Heart left ventricle (tissue), 16 donors: ENCODE measurements at regions of chr4 and their contacts with region 1.

Region 1: DNA sequence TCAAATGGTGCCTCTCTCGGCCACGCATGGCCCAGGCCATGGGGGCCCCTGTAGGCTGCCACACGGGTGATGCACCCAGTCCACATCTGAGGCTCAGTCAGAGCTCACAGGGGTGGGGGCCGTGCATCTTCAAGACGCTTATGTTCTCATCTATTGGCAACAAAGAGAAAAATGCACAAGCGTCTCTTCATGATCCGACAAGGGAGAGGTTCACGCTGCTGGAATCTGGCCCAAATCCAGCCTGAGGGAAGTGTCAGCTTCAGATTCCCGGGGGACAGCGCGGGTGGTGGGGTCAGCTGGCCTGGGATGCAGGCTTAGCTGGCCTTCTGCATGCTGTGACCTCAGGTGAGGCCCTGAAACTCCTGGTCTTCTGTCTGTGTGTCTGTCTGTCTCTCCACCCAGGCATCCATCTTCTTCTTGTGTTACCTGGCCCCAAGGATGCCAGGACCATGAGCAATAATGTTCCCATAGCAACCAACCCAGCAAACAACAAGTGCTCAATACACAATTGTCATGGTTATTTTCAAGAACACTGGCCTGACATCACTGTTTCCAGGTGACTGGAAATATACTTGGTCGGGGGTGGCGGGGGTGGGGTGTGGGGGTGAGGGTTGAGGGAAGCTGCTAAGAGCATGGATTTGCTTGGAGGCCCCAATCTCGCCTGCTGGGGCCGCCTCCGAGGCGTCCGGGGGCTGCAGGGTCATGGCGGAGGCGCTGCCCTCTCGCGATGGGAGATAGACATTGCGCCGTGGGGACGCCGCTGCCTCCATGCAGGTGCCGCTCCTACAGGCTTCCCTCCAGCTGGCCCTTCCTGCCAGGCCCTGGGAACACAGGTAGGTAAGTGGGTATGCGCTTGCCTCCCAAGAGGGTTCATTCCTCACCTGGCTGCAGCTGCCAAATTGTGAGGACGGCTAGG is 48.3 kb downstream of the ABLIM2 start:
- DNase-seq: peak in 1 of 5 donors; percentile 47
- ATAC-seq: no peak
- H3K4me3 ChIP-seq: no peak overlapping the region
- H3K27ac ChIP-seq: no peak overlapping the region
- H3K4me1 ChIP-seq: peaks cover 0 to 28% (median 16%) of the 10 kb centered on the region in 12 donors
- H3K27me3 ChIP-seq: no peaks in the 10 kb centered on the region
- CTCF ChIP-seq: peak in 4 of 12 donors; percentile 4 to 17 (median 10)
- POLR2A ChIP-seq: no peak

Region 2: DNA sequence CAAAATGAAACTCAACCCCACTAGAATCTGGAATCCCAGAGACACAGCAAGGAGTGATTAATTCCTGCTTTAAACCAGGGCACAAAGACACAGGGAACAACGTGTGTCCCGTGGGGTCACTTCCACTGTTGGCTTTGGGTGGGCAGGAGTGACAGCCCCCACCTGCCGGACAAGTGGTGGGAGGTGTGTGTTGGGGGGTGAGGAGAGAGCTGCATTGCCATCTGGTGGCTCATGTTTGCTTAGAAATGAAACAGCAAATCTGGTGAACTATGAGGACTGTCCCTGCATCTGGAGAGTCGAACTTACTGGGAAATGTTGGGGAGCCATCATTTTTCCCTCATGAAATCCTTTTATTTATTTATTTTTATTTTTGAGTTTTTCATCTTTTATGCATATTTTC is 94.8 kb before region 1 on chr4:
- intact Hi-C with region 1: no loop called
- DNase-seq: no peak
- ATAC-seq: no peak
- H3K4me3 ChIP-seq: peak overlapping the region in 4 of 12 donors; percentile 15 to 34 (median 22)
- H3K27ac ChIP-seq: no peak overlapping the region
- H3K4me1 ChIP-seq: peaks cover 0 to 6% (median 0%) of the 10 kb centered on the region in 12 donors
- H3K27me3 ChIP-seq: no peaks in the 10 kb centered on the region
- CTCF ChIP-seq: peak in 6 of 12 donors; percentile 13 to 45 (median 24)
- POLR2A ChIP-seq: no peak

Region 3: GRCh38 chr4:8085491-8086117 is 24.7 kb before region 1 on chr4:
- intact Hi-C with region 1: no loop called
- DNase-seq: peak in 2 of 5 donors; percentile 9 to 21
- ATAC-seq: no peak
- H3K4me3 ChIP-seq: no peak overlapping the region
- H3K27ac ChIP-seq: no peak overlapping the region
- H3K4me1 ChIP-seq: peaks cover 0 to 20% (median 2%) of the 10 kb centered on the region in 12 donors
- H3K27me3 ChIP-seq: no peaks in the 10 kb centered on the region
- CTCF ChIP-seq: no peak
- POLR2A ChIP-seq: no peak

Region 4: GRCh38 chr4:8135666-8136065 is 25.3 kb after region 1 on chr4:
- intact Hi-C with region 1: loop called in 1 of 10 experiments (anchors 1 kb)
- DNase-seq: peak in 2 of 5 donors; percentile 86 to 88
- ATAC-seq: peak; percentile 77 to 92 (median 84)
- H3K4me3 ChIP-seq: no peak overlapping the region
- H3K27ac ChIP-seq: peak overlapping the region in 3 of 12 donors; percentile 18 to 64 (median 33)
- H3K4me1 ChIP-seq: peaks cover 0 to 24% (median 2%) of the 10 kb centered on the region in 12 donors
- H3K27me3 ChIP-seq: no peaks in the 10 kb centered on the region
- CTCF ChIP-seq: no peak
- POLR2A ChIP-seq: no peak

Region 5: GRCh38 chr4:8158710-8159536 is 48.6 kb after region 1 on chr4 and contains the start of gene ABLIM2:
- intact Hi-C with region 1: loop called in 1 of 10 experiments (anchors 5 kb)
- DNase-seq: peak; percentile 98 to 100 (median 98)
- ATAC-seq: peak; percentile 97 to 98 (median 98)
- H3K4me3 ChIP-seq: peak within 1 kb of the TSS; percentile 63 to 99 (median 74)
- H3K27ac ChIP-seq: peak within 1 kb of the TSS in 11 of 12 donors; percentile 46 to 91 (median 74)
- H3K4me1 ChIP-seq: peaks cover 5 to 35% (median 21%) of the 10 kb centered on the region in 12 donors
- H3K27me3 ChIP-seq: peaks cover 0 to 14% (median 2%) of the 10 kb centered on the region in 9 donors
- CTCF ChIP-seq: peak in 1 of 12 donors; percentile 11
- POLR2A ChIP-seq: peak; percentile 14 to 89
- total RNA-seq, gene ABLIM2: 14.3 to 25.8 (median 18.4) TPM